K562 (cell line): ENCODE measurements at regions of chr18 and their contacts with region 1.

Region 1: GRCh38 chr18:8654503-8655451 is 45.5 kb downstream of the RAB12 start:
- DNase-seq: peak; percentile 33 to 56 (median 50)
- ATAC-seq: peak; percentile 60
- H3K4me3 ChIP-seq: no peak overlapping the region
- H3K27ac ChIP-seq: no peak overlapping the region
- H3K4me1 ChIP-seq: peaks cover 7 to 10% of the 10 kb centered on the region in 2 experiments; a peak in 3 of 5 replicates
- H3K27me3 ChIP-seq: no peaks in the 10 kb centered on the region; a peak in 1 of 5 replicates
- CTCF ChIP-seq: peak; percentile 54 to 92 (median 64); a peak in 4 of 6 replicates
- EP300 ChIP-seq: no peak
- POLR2A ChIP-seq: no peak
- RAD21 ChIP-seq: peak; percentile 91 to 93

Region 2: DNA sequence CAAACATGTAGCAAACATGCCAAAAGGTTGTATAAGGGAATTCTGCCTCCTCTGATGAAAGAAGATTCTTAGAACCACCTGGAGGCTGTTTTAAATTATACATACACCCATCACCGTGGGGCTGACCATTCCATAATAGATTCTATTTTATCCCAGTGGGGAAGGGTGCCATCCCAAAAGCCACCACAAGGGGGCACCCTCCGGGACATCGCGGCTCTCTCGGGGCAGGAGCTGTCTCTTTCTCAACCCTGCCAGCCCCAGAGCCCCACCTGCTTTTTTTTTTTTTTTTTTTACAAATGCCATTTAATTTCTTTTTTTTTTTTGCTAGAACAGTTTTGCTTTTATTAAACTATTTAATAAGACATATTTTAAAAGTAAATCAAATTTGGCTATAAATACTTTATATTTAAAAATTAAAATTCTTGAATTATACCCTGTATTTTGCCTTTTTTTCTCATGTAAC is 42.0 kb after region 1 on chr18:
- CTCF ChIA-PET with region 1: no interaction called
- POLR2A ChIA-PET with region 1: no interaction called
- in situ Hi-C with region 1: no loop called
- intact Hi-C with region 1: no loop called
- DNase-seq: peak; percentile 74 to 90 (median 86)
- ATAC-seq: peak; percentile 95
- H3K4me3 ChIP-seq: no peak overlapping the region
- H3K27ac ChIP-seq: no peak overlapping the region
- H3K4me1 ChIP-seq: peaks cover 0 to 2% of the 10 kb centered on the region in 2 experiments; a peak in 1 of 5 replicates
- H3K27me3 ChIP-seq: no peaks in the 10 kb centered on the region
- CTCF ChIP-seq: peak; percentile 88 to 94 (median 91)
- EP300 ChIP-seq: no peak
- POLR2A ChIP-seq: no peak
- RAD21 ChIP-seq: peak; percentile 76 to 80

Region 3: DNA sequence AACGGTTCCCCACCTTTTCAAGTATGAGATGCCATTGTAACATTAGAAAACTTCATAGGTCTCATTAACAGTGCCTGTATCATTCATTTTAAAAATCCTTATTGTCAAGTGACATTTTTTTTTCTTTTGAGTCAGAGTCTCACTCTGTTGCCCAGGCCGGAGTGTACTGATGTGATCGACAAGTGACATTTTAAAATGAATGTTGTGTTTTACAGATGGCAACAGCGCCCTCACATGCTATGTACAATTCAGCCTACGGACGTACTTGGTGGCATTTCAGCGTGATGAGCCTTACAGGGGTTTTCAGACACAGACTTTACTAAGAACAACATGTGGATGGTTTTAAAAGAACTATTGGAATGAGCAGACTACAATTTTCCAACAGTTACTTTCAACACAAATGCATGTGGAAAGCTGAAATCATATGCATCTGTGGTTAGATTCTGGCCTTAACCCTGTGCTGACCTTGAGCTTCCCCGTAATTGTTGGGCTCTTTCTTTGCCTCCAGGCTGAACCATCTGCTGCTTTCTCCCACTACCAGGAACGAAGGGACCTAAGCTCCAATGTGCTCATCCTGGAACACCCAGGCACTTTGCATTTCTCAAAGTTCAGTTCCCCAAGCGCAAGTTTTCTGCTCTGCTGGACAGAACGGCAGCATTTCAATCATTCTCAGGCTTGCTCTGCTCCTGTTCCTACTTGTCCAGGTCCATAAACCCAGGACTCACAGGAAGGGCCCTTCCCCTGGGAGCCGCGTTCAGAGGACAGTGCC is 327.8 kb after region 1 on chr18:
- CTCF ChIA-PET with region 1: interaction called, 14 read pairs
- POLR2A ChIA-PET with region 1: no interaction called
- in situ Hi-C with region 1: loop called (anchors 5 kb)
- intact Hi-C with region 1: loop called (anchors 1 kb)
- DNase-seq: peak in 3 of 4 experiments; percentile 40 to 85 (median 59)
- ATAC-seq: peak; percentile 94
- H3K4me3 ChIP-seq: no peak overlapping the region
- H3K27ac ChIP-seq: no peak overlapping the region
- H3K4me1 ChIP-seq: peaks cover 3 to 12% of the 10 kb centered on the region in 2 experiments; a peak in 3 of 5 replicates
- H3K27me3 ChIP-seq: no peaks in the 10 kb centered on the region
- CTCF ChIP-seq: peak; percentile 74 to 90 (median 81)
- EP300 ChIP-seq: peak; percentile 45; the same call in 1 of the 2 replicates
- POLR2A ChIP-seq: no peak
- RAD21 ChIP-seq: peak; percentile 93 to 98

Region 4: DNA sequence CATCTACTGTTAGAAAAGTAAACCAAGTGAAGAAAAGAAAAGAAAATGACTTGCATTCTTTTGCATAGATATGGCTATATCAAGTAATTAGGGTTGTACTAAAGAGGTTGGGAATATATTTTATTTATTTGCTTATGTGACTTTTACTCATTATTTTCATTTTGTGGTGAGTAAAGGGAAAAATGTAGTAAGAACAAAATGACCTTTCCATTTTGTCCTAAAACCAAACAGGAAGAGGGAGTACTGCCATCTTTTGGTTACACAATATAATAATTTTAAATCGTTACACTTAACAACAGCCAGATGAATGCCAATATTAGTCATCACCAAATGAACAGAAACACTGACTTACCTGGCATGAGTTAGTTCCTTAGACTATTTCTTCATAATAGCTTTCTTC is 400.4 kb after region 1 on chr18:
- CTCF ChIA-PET with region 1: no interaction called
- POLR2A ChIA-PET with region 1: no interaction called
- in situ Hi-C with region 1: no loop called
- intact Hi-C with region 1: loop called (anchors 5 kb)
- DNase-seq: peak in 2 of 4 experiments; percentile 41 to 55
- ATAC-seq: peak; percentile 79
- H3K4me3 ChIP-seq: no peak overlapping the region
- H3K27ac ChIP-seq: peak overlapping the region; percentile 49
- H3K4me1 ChIP-seq: peaks cover 0 to 12% of the 10 kb centered on the region in 2 experiments; a peak in 3 of 5 replicates
- H3K27me3 ChIP-seq: no peaks in the 10 kb centered on the region
- CTCF ChIP-seq: peak in 2 of 3 experiments; percentile 39 to 75; a peak in 3 of 6 replicates
- EP300 ChIP-seq: 0 out of 2 replicates have a peak, but pooled peaks have one; percentile 6
- POLR2A ChIP-seq: no peak
- RAD21 ChIP-seq: peak; percentile 84 to 90

Region 5: GRCh38 chr18:9147440-9148202 is 492.8 kb after region 1 on chr18:
- CTCF ChIA-PET with region 1: interaction called, 6 read pairs
- POLR2A ChIA-PET with region 1: interaction called, 3 read pairs
- in situ Hi-C with region 1: no loop called
- intact Hi-C with region 1: loop called (anchors 2 kb)
- DNase-seq: peak in 2 of 4 experiments; percentile 62 to 81
- ATAC-seq: peak; percentile 88
- H3K4me3 ChIP-seq: no peak overlapping the region
- H3K27ac ChIP-seq: peak overlapping the region; percentile 22; the same call in 2 of the 3 replicates
- H3K4me1 ChIP-seq: peaks cover 3 to 13% of the 10 kb centered on the region in 2 experiments; a peak in 4 of 5 replicates
- H3K27me3 ChIP-seq: no peaks in the 10 kb centered on the region
- CTCF ChIP-seq: peak; percentile 79 to 92 (median 81)
- EP300 ChIP-seq: no peak; the same call in 1 of the 2 replicates
- POLR2A ChIP-seq: no peak
- RAD21 ChIP-seq: peak; percentile 96